ENCODE measurements at regions of chr3 and their contacts with region 1.

Region 1: GRCh38 chr3:188270423-188270972 is 116.5 kb downstream of the LPP start:
- DNase-seq: no peak
- H3K4me3 ChIP-seq: no peak overlapping the region
- H3K27ac ChIP-seq: peak overlapping the region; percentile 88 to 94 (median 90)
- H3K4me1 ChIP-seq: peaks cover 0 to 97% (median 95%) of the 10 kb centered on the region in 4 donors
- H3K27me3 ChIP-seq: no peaks in the 10 kb centered on the region
- CTCF ChIP-seq: no peak
- EP300 ChIP-seq: peak in 3 of 4 donors; percentile 41 to 93 (median 77)
- POLR2A ChIP-seq: no peak

Region 2: GRCh38 chr3:188220988-188221818 is 49.3 kb before region 1 on chr3:
- intact Hi-C with region 1: loop called (anchors 2 kb)
- DNase-seq: peak; percentile 91
- H3K4me3 ChIP-seq: peak overlapping the region in 2 of 4 donors; percentile 22 to 25
- H3K27ac ChIP-seq: peak overlapping the region; percentile 84 to 97 (median 93)
- H3K4me1 ChIP-seq: peaks cover 2 to 99% (median 95%) of the 10 kb centered on the region in 4 donors
- H3K27me3 ChIP-seq: no peaks in the 10 kb centered on the region
- CTCF ChIP-seq: no peak
- EP300 ChIP-seq: peak; percentile 95 to 100 (median 100)
- POLR2A ChIP-seq: no peak

Region 3: GRCh38 chr3:188244395-188244861 is 26.1 kb before region 1 on chr3:
- intact Hi-C with region 1: no loop called
- DNase-seq: no peak
- H3K4me3 ChIP-seq: no peak overlapping the region
- H3K27ac ChIP-seq: peak overlapping the region; percentile 70 to 97 (median 83)
- H3K4me1 ChIP-seq: peaks cover 0 to 98% (median 91%) of the 10 kb centered on the region in 4 donors
- H3K27me3 ChIP-seq: no peaks in the 10 kb centered on the region
- CTCF ChIP-seq: no peak
- EP300 ChIP-seq: no peak
- POLR2A ChIP-seq: no peak

Region 4: GRCh38 chr3:188526057-188526456 is 255.6 kb after region 1 on chr3:
- intact Hi-C with region 1: no loop called
- DNase-seq: peak; percentile 75
- H3K4me3 ChIP-seq: no peak overlapping the region
- H3K27ac ChIP-seq: peak overlapping the region; percentile 34 to 59 (median 50)
- H3K4me1 ChIP-seq: peaks cover 0 to 68% (median 64%) of the 10 kb centered on the region in 4 donors
- H3K27me3 ChIP-seq: no peaks in the 10 kb centered on the region
- CTCF ChIP-seq: no peak
- EP300 ChIP-seq: no peak
- POLR2A ChIP-seq: no peak

Measured in sigmoid colon (tissue), 7 donors.